CD8-positive, alpha-beta memory T cell (primary cell): ENCODE measurements at regions of chr22 and their contacts with region 1.

Region 1: DNA sequence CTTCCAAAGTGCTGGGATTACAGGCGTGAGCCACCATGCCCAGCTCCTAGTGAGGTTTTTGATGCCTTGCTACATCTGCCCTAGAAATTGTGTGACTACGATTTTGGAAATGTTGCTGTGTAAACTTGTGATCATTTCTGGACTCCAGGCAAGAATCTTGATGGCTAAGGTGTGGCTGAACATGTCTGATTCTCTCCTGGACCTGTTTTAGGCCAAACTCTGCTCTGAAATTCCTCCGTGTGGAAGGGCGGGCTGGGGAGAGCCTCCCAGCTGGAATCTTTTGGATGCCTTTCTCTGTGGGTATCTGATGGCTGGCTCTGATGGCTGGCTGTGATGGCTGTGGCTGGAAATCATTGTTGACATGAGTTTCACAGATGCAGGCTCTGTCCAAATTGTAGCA is 8.2 kb downstream of the PNPLA3 start:
- DNase-seq: no peak
- H3K4me3 ChIP-seq: no peak overlapping the region
- H3K4me3 Mint-ChIP-seq: no peak overlapping the region
- H3K27ac ChIP-seq: no peak overlapping the region
- H3K27ac Mint-ChIP-seq: no peak overlapping the region
- H3K4me1 ChIP-seq: no peaks in the 10 kb centered on the region
- H3K4me1 Mint-ChIP-seq: no peaks in the 10 kb centered on the region
- H3K27me3 ChIP-seq: no peaks in the 10 kb centered on the region
- H3K27me3 Mint-ChIP-seq: peaks cover 10 to 53% of the 10 kb centered on the region in 2 donors

Region 2: DNA sequence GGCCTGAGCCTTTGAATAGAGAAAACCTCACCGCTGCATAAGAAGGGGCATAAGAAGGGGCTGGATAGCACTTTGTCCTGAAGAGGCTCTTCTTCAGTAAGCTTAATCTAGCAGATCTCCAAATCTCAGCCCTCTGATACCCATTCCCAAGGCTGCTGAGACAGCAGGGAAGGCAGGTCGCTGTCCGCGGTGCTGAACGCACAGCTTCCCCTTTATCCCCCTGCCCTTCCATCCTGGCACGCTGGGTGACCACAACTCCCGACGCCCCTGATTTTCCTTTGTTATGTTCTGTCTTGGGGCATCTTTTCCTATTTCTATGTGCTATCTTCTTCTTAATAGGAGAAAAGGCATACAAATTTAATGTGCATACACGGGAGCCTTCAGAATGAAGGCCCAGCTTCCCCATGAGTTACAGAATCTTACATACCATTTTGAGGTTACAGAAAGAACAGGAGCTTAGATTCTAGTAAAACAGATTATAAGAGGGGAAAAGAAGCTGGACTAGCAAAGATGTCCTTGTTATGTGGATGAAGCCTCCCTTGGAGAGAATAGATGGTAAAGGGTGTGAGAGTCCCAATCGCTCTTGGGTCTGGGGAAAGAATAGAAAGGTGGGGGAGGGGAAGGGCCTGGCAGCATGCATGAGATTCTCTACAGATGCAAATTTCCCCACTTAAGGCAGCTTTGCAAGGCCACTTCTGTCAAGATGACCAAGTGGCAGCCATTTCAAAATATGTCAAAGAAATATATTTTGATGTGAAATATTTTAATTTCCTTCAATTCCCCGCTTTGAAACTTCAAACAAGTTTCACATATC is 63.7 kb before region 1 on chr22:
- CTCF ChIA-PET with region 1: no interaction called
- POLR2A ChIA-PET with region 1: no interaction called
- DNase-seq: no peak
- H3K4me3 ChIP-seq: no peak overlapping the region
- H3K4me3 Mint-ChIP-seq: no peak overlapping the region
- H3K27ac ChIP-seq: no peak overlapping the region
- H3K27ac Mint-ChIP-seq: no peak overlapping the region
- H3K4me1 ChIP-seq: no peaks in the 10 kb centered on the region
- H3K4me1 Mint-ChIP-seq: no peaks in the 10 kb centered on the region
- H3K27me3 ChIP-seq: no peaks in the 10 kb centered on the region
- H3K27me3 Mint-ChIP-seq: peaks cover 28 to 45% of the 10 kb centered on the region in 2 donors

Region 3: DNA sequence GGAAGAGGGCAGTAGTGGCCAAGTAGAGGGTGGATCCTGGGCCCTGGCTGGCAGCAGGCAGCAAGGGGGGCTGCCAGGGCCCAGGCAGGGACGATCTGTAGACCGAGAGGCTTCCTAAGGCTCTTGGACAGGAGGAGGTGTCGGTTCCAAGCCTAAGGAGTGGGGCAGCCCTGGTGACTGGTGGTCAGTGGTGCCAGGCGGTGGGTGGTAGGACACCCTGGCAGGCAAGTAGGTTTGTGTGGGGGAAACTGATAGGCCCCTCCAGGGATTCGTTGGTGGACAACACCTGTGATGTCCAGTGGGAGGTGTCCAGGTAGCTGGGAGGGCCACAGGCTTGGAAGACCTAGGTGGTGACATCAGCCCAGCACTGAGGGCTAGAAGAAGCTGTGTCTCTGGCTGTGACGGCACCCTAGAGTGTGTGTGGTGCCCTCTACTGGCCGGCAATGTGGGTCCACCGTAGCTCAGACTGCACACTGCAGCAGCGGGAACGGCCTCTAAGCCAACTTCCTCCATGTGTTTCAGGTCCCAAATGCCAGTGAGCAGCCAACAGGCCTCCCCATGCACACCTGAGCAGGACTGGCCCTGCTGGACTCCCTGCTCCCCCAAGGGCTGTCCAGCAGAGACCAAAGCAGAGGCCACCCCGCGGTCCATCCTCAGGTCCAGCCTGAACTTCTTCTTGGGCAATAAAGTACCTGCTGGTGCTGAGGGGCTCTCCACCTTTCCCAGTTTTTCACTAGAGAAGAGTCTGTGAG is 14.0 kb after region 1 on chr22:
- CTCF ChIA-PET with region 1: interaction called, 10 read pairs
- POLR2A ChIA-PET with region 1: no interaction called
- DNase-seq: peak; percentile 31 to 70 (median 40)
- H3K4me3 ChIP-seq: no peak overlapping the region
- H3K4me3 Mint-ChIP-seq: no peak overlapping the region
- H3K27ac ChIP-seq: no peak overlapping the region
- H3K27ac Mint-ChIP-seq: no peak overlapping the region
- H3K4me1 ChIP-seq: no peaks in the 10 kb centered on the region
- H3K4me1 Mint-ChIP-seq: no peaks in the 10 kb centered on the region
- H3K27me3 ChIP-seq: no peaks in the 10 kb centered on the region
- H3K27me3 Mint-ChIP-seq: peaks cover 15 to 25% of the 10 kb centered on the region in 2 donors